ENCODE measurements at regions of chr17 and their contacts with region 1.

Region 1: DNA sequence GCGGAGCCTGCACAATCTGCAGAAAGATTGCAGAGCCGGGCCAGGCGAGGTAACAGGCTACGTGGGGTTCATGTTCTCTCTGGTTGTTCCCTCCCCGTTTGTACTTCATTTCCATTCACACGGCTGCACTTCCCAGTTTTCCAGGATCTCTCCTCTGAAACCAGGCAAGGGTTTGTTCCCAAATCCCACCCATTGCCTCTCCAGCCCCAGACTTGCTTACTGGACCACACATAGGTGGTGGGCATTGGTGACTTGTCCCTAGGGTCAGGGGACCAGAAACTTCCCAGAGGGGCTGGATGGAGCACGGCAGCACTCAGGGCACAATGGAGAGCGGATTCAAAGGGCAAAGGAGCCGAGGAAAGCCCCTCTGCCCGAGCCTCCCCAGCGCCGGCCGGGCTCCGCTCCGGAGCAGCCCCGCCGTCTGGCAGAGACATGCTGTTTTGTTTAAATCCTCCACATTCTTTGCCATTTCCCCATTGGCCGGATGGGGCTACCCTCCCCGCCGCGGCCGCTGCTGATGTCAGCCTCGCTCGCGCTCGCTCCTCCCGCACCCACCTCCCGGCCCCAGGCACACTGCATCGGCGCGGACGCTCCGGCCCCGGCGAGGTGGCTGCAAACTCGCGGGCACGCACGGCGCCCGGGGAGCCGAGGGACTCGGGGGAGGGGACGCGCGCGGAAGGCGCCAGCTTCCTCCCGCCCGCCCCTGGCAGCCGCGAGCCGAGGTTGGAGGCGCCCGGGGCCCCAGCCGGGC is at the start of gene PITPNC1:
- DNase-seq: peak; percentile 93
- ATAC-seq: peak; percentile 79
- H3K4me3 Mint-ChIP-seq: peak within 1 kb of the TSS; percentile 89
- H3K27ac Mint-ChIP-seq: peak within 1 kb of the TSS; percentile 90
- H3K4me1 Mint-ChIP-seq: peaks cover 44% of the 10 kb centered on the region
- H3K27me3 Mint-ChIP-seq: no peaks in the 10 kb centered on the region
- total RNA-seq, gene PITPNC1: 74.0 to 76.5 TPM

Region 2: GRCh38 chr17:67322042-67322787 is 54.7 kb before region 1 on chr17:
- CTCF ChIA-PET with region 1: no interaction called
- POLR2A ChIA-PET with region 1: no interaction called
- DNase-seq: no peak
- ATAC-seq: no peak
- H3K4me3 Mint-ChIP-seq: no peak overlapping the region
- H3K27ac Mint-ChIP-seq: no peak overlapping the region
- H3K4me1 Mint-ChIP-seq: no peaks in the 10 kb centered on the region
- H3K27me3 Mint-ChIP-seq: no peaks in the 10 kb centered on the region

Region 3: GRCh38 chr17:67421869-67422273 is 45.0 kb after region 1 on chr17:
- CTCF ChIA-PET with region 1: interaction called, 13 read pairs
- POLR2A ChIA-PET with region 1: interaction called, 9 read pairs
- DNase-seq: peak; percentile 80
- ATAC-seq: peak; percentile 95
- H3K4me3 Mint-ChIP-seq: peak overlapping the region; percentile 51
- H3K27ac Mint-ChIP-seq: peak overlapping the region; percentile 95
- H3K4me1 Mint-ChIP-seq: peaks cover 72% of the 10 kb centered on the region
- H3K27me3 Mint-ChIP-seq: no peaks in the 10 kb centered on the region

Region 4: DNA sequence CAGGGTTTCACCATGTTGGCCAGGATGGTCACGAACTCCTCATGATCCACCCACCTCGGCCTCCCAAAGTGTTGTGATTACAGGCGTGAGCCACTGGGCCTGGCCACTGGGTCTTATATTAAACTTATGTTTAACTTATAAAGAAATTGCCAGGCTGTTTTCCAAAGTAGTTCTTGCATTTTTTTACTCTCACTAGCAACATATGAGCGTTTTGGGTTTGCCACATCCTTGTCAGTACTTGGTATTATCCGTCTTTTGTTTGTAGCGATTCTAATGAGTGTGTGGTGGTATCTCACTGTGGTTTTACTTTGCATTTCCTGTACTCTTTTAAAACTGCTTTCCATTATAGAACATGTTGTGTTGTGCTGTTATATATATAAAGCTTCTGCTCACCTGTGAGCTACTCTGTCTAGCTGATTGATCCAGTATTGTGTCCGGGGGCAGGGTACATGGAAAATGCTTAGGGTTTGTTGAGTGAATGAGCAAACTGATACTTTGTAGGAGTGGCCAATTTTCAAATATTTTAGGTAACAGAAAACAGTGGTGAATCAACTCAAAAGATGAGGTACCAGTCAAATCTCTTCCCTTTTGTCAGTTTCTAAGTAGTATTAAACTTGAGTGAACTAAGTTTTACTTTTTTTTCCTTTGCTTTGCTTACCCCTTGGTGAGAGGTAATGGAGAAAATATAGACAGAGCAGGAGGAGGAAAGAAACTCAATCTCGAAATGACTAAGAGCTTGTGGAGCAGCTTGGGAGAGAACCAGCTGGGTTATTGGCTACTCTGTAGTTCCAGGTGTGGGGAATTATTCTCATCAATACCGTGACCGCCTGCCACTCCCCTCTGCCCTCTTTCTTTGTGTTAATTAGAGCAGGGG is 76.0 kb after region 1 on chr17:
- CTCF ChIA-PET with region 1: interaction called, 18 read pairs
- POLR2A ChIA-PET with region 1: interaction called, 12 read pairs
- DNase-seq: peak; percentile 68
- ATAC-seq: peak; percentile 84
- H3K4me3 Mint-ChIP-seq: peak overlapping the region; percentile 67
- H3K27ac Mint-ChIP-seq: peak overlapping the region; percentile 96
- H3K4me1 Mint-ChIP-seq: peaks cover 88% of the 10 kb centered on the region
- H3K27me3 Mint-ChIP-seq: no peaks in the 10 kb centered on the region

Region 5: DNA sequence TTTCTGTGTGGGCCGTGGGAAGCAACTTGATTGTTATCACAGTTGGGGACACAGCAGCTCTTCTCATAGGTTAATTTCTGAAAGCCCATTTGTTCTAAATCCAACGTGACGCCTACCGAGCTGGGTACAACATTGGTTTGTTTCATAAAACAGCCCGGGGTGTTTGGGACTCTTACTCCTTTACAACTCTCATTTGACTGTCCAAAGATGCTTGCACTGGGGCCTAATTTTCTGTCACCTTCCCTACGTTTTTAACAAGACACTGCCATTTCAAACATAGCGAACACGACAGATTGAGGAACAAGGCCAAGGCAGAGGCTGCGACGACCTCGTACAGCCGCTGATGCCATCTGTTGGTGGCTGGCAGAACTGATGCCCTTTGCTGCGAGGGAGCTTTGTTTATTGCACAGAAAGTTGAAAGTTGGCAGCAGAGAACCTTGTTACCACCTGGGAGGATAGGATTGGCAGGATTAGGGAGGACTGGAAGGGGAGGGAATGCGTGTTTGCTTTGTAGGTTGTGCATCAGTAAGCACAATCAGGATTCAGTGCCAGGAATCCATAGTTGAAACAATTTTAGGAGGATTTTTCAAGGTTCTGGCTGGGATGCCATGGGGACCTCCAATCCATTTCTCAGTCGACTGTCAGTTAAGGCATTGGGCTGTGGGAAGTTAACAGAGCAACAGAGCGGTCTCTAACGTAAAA is 98.5 kb after region 1 on chr17:
- CTCF ChIA-PET with region 1: interaction called, 365 read pairs
- POLR2A ChIA-PET with region 1: interaction called, 135 read pairs
- DNase-seq: peak; percentile 91
- ATAC-seq: peak; percentile 76
- H3K4me3 Mint-ChIP-seq: peak overlapping the region; percentile 72
- H3K27ac Mint-ChIP-seq: peak overlapping the region; percentile 94
- H3K4me1 Mint-ChIP-seq: peaks cover 72% of the 10 kb centered on the region
- H3K27me3 Mint-ChIP-seq: no peaks in the 10 kb centered on the region

Region 6: GRCh38 chr17:67647482-67647881 is 270.6 kb after region 1 on chr17:
- CTCF ChIA-PET with region 1: interaction called, 12 read pairs
- POLR2A ChIA-PET with region 1: no interaction called
- DNase-seq: no peak
- ATAC-seq: no peak
- H3K4me3 Mint-ChIP-seq: no peak overlapping the region
- H3K27ac Mint-ChIP-seq: no peak overlapping the region
- H3K4me1 Mint-ChIP-seq: peaks cover 17% of the 10 kb centered on the region
- H3K27me3 Mint-ChIP-seq: no peaks in the 10 kb centered on the region

Measured in activated CD8-positive, alpha-beta T cell treated with anti-CD3 and anti-CD28 coated beads, Interleukin-2, amount 10 ng/mL, durations not matched to agents 7 days and 5 days (primary cell).